Activated CD4-positive, alpha-beta memory T cell treated with anti-CD3 and anti-CD28 coated beads, Interleukin-2, amount 10 ng/mL, durations not matched to agents 7 days and 5 days (primary cell): ENCODE measurements at regions of chr12 and their contacts with region 1.

Region 1: GRCh38 chr12:53508534-53509199 is 1.4 kb upstream of the NPFF start:
- DNase-seq: peak; percentile 88
- H3K4me3 Mint-ChIP-seq: no peak overlapping the region
- H3K27ac Mint-ChIP-seq: peak overlapping the region; percentile 62
- H3K4me1 Mint-ChIP-seq: peaks cover 14% of the 10 kb centered on the region
- H3K27me3 Mint-ChIP-seq: no peaks in the 10 kb centered on the region

Region 2: GRCh38 chr12:53327435-53328042 is 181.1 kb before region 1 on chr12:
- CTCF ChIA-PET with region 1: interaction called, 11 read pairs
- POLR2A ChIA-PET with region 1: interaction called, 3 read pairs
- DNase-seq: no peak
- H3K4me3 Mint-ChIP-seq: peak overlapping the region; percentile 4
- H3K27ac Mint-ChIP-seq: no peak overlapping the region
- H3K4me1 Mint-ChIP-seq: peaks cover 21% of the 10 kb centered on the region
- H3K27me3 Mint-ChIP-seq: peaks cover 27% of the 10 kb centered on the region

Region 3: GRCh38 chr12:53476769-53477209 is 31.9 kb before region 1 on chr12:
- CTCF ChIA-PET with region 1: interaction called, 54 read pairs
- POLR2A ChIA-PET with region 1: interaction called, 6 read pairs
- DNase-seq: no peak
- H3K4me3 Mint-ChIP-seq: no peak overlapping the region
- H3K27ac Mint-ChIP-seq: peak overlapping the region; percentile 6
- H3K4me1 Mint-ChIP-seq: peaks cover 64% of the 10 kb centered on the region
- H3K27me3 Mint-ChIP-seq: no peaks in the 10 kb centered on the region

Region 4: DNA sequence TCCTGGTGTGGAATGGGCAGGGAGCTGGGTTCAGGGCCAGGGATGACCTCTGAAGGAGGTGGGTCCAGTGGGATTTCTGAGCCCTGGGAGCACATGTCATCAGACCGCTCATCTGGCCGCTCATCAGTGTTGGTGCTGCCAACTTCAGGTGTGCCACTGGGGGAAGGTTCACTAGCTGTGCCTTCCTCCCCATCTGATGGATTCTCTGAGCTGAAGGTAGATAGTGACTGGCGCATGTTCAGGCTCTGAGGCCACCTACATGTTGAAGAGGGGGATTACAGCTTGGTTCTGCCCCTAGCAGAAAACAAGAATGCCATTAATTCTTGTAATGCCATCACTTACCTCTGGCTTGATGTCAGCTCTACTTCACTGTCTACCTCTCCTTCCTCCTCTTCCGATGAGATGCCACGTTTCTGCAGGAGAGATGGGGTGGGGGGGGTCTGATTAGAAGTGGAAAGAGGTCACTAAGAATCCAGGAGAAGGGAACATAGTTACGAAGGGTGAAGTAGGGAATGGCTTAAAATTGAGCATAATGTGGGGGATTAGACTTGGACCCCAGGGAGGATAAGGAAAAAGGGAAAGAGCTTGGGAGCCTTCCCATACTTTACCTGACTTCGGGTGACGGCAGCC is 26.6 kb before region 1 on chr12:
- CTCF ChIA-PET with region 1: interaction called, 54 read pairs
- POLR2A ChIA-PET with region 1: interaction called, 6 read pairs
- DNase-seq: no peak
- H3K4me3 Mint-ChIP-seq: no peak overlapping the region
- H3K27ac Mint-ChIP-seq: no peak overlapping the region
- H3K4me1 Mint-ChIP-seq: peaks cover 19% of the 10 kb centered on the region
- H3K27me3 Mint-ChIP-seq: no peaks in the 10 kb centered on the region

Region 5: DNA sequence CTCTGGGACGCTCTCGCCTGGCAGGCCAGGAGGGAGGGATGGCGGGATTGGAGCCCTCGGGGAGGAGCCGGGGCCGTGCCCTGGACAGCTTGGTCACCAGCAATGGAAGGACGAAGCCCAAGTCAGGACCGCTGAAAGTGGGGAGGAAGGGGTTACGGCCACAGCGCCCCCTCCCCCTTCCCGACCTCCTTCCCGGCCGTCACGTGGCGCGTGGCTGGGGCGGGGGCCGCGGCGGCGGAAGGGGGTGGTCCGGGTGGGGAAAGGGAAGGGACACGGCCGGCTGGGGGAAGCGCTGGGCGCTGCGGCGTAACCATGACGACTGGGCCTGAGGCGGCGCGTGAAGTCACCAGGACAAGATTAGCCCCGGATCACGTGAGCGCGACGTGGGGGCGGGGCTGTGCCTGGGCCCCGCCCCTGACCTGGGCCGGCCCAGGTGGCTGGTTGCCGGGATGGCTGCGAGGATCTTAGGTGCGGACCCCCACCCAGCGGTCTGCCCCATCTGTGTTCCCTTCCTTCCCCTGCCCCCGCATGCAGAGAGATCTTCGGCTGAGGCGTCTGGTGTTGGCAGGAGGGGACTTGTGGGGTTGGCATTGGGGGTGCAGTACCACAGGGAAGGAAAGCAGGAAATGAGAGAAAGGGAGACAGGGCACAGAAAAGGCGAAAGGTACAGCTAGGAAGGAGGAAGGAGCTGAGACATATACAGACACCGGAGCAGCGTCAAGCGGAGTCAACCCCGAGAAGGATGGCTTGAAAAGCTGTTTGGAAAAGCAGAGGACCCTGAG is 15.6 kb before region 1 on chr12:
- CTCF ChIA-PET with region 1: interaction called, 47 read pairs
- POLR2A ChIA-PET with region 1: interaction called, 7 read pairs
- DNase-seq: peak; percentile 88
- H3K4me3 Mint-ChIP-seq: peak overlapping the region; percentile 91
- H3K27ac Mint-ChIP-seq: peak overlapping the region; percentile 63
- H3K4me1 Mint-ChIP-seq: peaks cover 38% of the 10 kb centered on the region
- H3K27me3 Mint-ChIP-seq: no peaks in the 10 kb centered on the region

Region 6: GRCh38 chr12:53551889-53552291 is 43.2 kb after region 1 on chr12:
- CTCF ChIA-PET with region 1: no interaction called
- POLR2A ChIA-PET with region 1: no interaction called
- DNase-seq: no peak
- H3K4me3 Mint-ChIP-seq: no peak overlapping the region
- H3K27ac Mint-ChIP-seq: no peak overlapping the region
- H3K4me1 Mint-ChIP-seq: no peaks in the 10 kb centered on the region
- H3K27me3 Mint-ChIP-seq: no peaks in the 10 kb centered on the region

Region 7: GRCh38 chr12:53645165-53645564 is 136.5 kb after region 1 on chr12:
- CTCF ChIA-PET with region 1: no interaction called
- POLR2A ChIA-PET with region 1: no interaction called
- DNase-seq: no peak
- H3K4me3 Mint-ChIP-seq: no peak overlapping the region
- H3K27ac Mint-ChIP-seq: no peak overlapping the region
- H3K4me1 Mint-ChIP-seq: no peaks in the 10 kb centered on the region
- H3K27me3 Mint-ChIP-seq: peaks cover 2% of the 10 kb centered on the region